Activated B cell treated with CpG ODN at 0.5 μM for 24 hours (primary cell): ENCODE measurements at regions of chr1 and their contacts with region 1.

Region 1: DNA sequence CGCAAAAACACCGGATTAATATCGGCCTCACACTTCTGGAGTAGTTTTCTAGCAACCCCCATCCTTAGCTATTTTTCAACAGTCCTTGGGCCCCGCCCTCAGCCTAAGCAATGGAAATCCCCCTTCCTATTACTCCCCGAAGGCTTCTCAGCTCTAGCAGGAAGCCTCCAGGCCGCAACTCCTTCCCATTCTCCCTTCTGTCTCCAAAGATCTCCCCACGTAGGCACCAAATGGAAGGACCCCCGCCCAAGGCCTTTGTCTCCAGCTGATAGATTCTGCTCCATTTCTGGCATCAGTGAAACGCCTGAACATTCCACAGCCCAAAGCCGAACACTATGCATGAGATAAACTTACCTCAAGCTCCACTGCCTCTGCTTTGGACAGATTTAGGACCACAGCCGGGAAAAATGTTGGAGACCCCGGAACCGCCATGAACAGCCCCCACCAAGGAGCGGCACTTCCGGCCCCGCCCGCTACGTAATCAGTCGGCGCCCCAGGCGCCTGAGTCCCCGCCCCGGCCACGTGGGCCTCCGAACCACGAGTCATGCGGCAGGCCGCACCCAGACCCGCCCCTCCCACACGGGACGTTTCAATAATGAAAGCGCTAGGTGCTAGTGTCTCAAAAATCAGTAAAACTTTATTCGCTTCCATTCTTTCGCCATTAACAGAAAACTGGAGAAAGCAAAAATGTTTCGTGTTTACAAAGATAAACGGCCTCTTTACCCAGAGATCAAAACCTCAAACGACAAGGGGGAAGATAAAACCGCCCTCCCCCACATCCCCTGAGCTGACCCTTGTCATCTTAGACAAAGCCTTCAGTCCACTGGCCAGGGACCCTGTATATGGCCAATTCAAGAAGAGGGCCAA is at the start of gene NRAS:
- DNase-seq: peak; percentile 97
- ATAC-seq: peak; percentile 94
- H3K4me3 Mint-ChIP-seq: peak within 1 kb of the TSS; percentile 99
- H3K27ac Mint-ChIP-seq: peak within 1 kb of the TSS; percentile 98
- H3K4me1 Mint-ChIP-seq: peaks cover 28% of the 10 kb centered on the region
- H3K27me3 Mint-ChIP-seq: no peaks in the 10 kb centered on the region
- CTCF ChIP-seq: no peak
- total RNA-seq, gene NRAS: 53.3 and 55.5 TPM in 2 replicates

Region 2: GRCh38 chr1:113660088-113660487 is 1056.4 kb before region 1 on chr1:
- CTCF ChIA-PET with region 1: no interaction called
- POLR2A ChIA-PET with region 1: no interaction called
- intact Hi-C with region 1: no loop called
- DNase-seq: no peak
- ATAC-seq: no peak
- H3K4me3 Mint-ChIP-seq: no peak overlapping the region
- H3K27ac Mint-ChIP-seq: no peak overlapping the region
- H3K4me1 Mint-ChIP-seq: no peaks in the 10 kb centered on the region
- H3K27me3 Mint-ChIP-seq: no peaks in the 10 kb centered on the region
- CTCF ChIP-seq: no peak

Region 3: DNA sequence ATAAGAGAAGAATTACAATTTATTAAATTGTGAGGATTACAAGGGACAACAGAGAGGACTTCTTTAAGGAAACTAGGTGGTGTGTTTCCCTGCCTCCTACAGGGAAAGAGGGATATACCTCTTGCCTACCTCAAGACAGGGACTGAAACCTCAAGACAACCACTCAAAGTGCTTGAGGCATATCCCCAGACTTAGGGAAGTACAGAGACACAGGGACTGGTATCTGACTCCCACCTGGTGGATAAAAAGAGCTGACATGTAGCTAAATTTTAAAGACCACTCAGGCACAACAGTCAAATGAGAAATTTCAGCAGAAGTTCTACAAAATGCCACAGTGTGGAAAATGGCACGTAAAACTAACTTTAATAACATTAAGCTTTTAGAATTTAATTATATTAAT is 68.0 kb before region 1 on chr1:
- CTCF ChIA-PET with region 1: no interaction called
- POLR2A ChIA-PET with region 1: no interaction called
- intact Hi-C with region 1: no loop called
- DNase-seq: no peak
- ATAC-seq: no peak
- H3K4me3 Mint-ChIP-seq: no peak overlapping the region
- H3K27ac Mint-ChIP-seq: no peak overlapping the region
- H3K4me1 Mint-ChIP-seq: no peaks in the 10 kb centered on the region
- H3K27me3 Mint-ChIP-seq: peaks cover 4% of the 10 kb centered on the region
- CTCF ChIP-seq: no peak

Region 4: DNA sequence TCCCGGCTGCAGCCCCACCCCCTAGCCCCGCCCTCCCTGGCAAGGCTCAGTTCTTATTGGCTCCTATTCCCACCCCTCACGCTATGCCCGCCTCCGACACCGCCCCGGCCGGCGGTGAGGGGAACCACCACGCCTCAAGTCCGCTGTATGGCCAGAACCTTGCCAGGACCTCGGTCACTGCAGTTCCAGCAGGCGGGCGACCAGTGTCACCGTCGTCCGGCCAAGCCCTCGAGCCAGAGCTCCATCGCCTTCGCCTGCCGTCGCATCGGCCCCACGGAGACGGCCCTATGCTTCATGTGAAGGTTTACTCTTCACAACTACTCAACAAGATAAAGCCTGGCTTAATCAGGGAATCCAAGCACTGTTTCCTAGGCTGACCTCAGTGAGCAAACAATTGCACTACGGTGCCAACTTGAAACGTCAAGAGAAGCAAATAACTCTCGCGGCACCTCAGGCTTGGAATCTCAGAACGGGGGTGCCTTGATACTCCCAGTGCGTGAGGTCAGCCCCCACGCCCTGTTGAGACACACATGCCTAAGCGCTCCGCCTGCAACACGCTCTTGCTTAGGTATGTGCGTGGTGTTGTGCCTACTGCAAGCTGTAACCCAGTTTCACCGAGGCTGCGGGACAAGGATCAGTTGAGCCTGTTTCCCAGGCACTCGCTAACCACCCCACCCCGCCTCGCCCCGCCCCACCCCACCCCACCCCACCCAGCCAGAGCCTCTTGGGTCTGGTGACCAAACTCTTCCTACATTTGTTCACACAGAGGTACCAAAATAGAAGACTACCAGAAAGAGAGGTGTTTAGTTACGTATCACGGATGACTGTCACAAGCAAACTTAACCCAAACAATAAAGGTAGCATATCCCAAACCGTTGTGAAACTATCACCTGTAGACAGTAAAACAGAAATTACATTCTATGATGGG is 46.2 kb before region 1 on chr1:
- CTCF ChIA-PET with region 1: interaction called, 4 read pairs
- POLR2A ChIA-PET with region 1: no interaction called
- intact Hi-C with region 1: loop called (anchors 1 kb)
- DNase-seq: peak; percentile 80
- ATAC-seq: peak; percentile 99
- H3K4me3 Mint-ChIP-seq: peak overlapping the region; percentile 94
- H3K27ac Mint-ChIP-seq: peak overlapping the region; percentile 67
- H3K4me1 Mint-ChIP-seq: peaks cover 10% of the 10 kb centered on the region
- H3K27me3 Mint-ChIP-seq: peaks cover 30% of the 10 kb centered on the region
- CTCF ChIP-seq: no peak

Region 5: GRCh38 chr1:114735479-114735878 is 18.9 kb after region 1 on chr1:
- CTCF ChIA-PET with region 1: no interaction called
- POLR2A ChIA-PET with region 1: interaction called, 5 read pairs
- intact Hi-C with region 1: loop called (anchors 2 kb)
- DNase-seq: no peak
- ATAC-seq: no peak
- H3K4me3 Mint-ChIP-seq: no peak overlapping the region
- H3K27ac Mint-ChIP-seq: no peak overlapping the region
- H3K4me1 Mint-ChIP-seq: no peaks in the 10 kb centered on the region
- H3K27me3 Mint-ChIP-seq: no peaks in the 10 kb centered on the region
- CTCF ChIP-seq: no peak

Region 6: GRCh38 chr1:114780344-114781226 is 64.0 kb after region 1 on chr1 and contains the start of gene SIKE1:
- CTCF ChIA-PET with region 1: no interaction called
- POLR2A ChIA-PET with region 1: interaction called, 12 read pairs
- intact Hi-C with region 1: loop called (anchors 1 kb)
- DNase-seq: peak; percentile 80
- ATAC-seq: peak; percentile 97
- H3K4me3 Mint-ChIP-seq: peak within 1 kb of the TSS; percentile 100
- H3K27ac Mint-ChIP-seq: peak within 1 kb of the TSS; percentile 97
- H3K4me1 Mint-ChIP-seq: peaks cover 28% of the 10 kb centered on the region
- H3K27me3 Mint-ChIP-seq: peaks cover 7% of the 10 kb centered on the region
- CTCF ChIP-seq: no peak
- total RNA-seq, gene SIKE1: 38.4 and 44.2 TPM in 2 replicates